RWPE1 (cell line): ENCODE measurements at regions of chr22 and their contacts with region 1.

Region 1: GRCh38 chr22:41713004-41713403 is 13.7 kb downstream of the MEI1 start:
- DNase-seq: no peak
- H3K27ac ChIP-seq: no peak overlapping the region
- CTCF ChIP-seq: no peak

Region 2: GRCh38 chr22:41697126-41697775 is 15.8 kb before region 1 on chr22:
- CTCF ChIA-PET with region 1: interaction called, 10 read pairs
- POLR2A ChIA-PET with region 1: no interaction called
- DNase-seq: peak; percentile 61
- H3K27ac ChIP-seq: peak overlapping the region; percentile 60
- CTCF ChIP-seq: peak; percentile 95